ENCODE measurements at regions of chr3 and their contacts with region 1.

Region 1: DNA sequence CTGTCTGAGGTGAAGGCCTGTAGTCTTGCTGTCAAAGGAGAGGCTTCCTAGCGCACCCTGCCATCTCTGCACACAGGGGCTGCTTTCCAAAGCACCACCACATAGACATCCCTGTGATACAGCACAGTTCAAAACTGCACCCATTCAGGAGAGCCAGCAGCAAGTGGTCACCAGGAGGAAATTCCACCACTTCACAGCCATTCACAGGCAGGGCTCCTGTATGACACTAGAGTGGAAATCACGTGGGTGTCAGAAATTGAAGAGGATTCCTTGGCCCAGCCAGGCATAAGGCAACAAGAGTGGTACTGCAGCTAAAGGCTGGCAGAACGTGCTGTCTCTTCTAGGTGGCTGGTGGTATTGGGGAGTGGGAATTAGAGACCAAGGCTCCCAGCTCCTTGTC is 102.8 kb downstream of the RFTN1 start:
- DNase-seq: no peak
- ATAC-seq: no peak
- H3K4me3 ChIP-seq: no peak overlapping the region
- H3K27ac ChIP-seq: peak overlapping the region; percentile 37; the same call in 1 of the 2 replicates
- H3K4me1 ChIP-seq: peaks cover 47% of the 10 kb centered on the region
- H3K27me3 ChIP-seq: no peaks in the 10 kb centered on the region
- CTCF ChIP-seq: no peak
- EP300 ChIP-seq: no peak
- POLR2A ChIP-seq: no peak
- RAD21 ChIP-seq: no peak

Region 2: GRCh38 chr3:16388850-16389441 is 21.7 kb before region 1 on chr3:
- CTCF ChIA-PET with region 1: interaction called, 4 read pairs
- POLR2A ChIA-PET with region 1: interaction called, 6 read pairs
- RAD21 ChIA-PET with region 1: interaction called, 5 read pairs
- SMC1A ChIA-PET with region 1: interaction called, 13 read pairs
- in situ Hi-C with region 1: no loop called
- intact Hi-C with region 1: no loop called
- DNase-seq: no peak
- ATAC-seq: no peak
- H3K4me3 ChIP-seq: no peak overlapping the region
- H3K27ac ChIP-seq: peak overlapping the region; percentile 32; the same call in 1 of the 2 replicates
- H3K4me1 ChIP-seq: peaks cover 23% of the 10 kb centered on the region
- H3K27me3 ChIP-seq: no peaks in the 10 kb centered on the region
- CTCF ChIP-seq: no peak
- EP300 ChIP-seq: no peak
- POLR2A ChIP-seq: no peak
- RAD21 ChIP-seq: no peak

Region 3: DNA sequence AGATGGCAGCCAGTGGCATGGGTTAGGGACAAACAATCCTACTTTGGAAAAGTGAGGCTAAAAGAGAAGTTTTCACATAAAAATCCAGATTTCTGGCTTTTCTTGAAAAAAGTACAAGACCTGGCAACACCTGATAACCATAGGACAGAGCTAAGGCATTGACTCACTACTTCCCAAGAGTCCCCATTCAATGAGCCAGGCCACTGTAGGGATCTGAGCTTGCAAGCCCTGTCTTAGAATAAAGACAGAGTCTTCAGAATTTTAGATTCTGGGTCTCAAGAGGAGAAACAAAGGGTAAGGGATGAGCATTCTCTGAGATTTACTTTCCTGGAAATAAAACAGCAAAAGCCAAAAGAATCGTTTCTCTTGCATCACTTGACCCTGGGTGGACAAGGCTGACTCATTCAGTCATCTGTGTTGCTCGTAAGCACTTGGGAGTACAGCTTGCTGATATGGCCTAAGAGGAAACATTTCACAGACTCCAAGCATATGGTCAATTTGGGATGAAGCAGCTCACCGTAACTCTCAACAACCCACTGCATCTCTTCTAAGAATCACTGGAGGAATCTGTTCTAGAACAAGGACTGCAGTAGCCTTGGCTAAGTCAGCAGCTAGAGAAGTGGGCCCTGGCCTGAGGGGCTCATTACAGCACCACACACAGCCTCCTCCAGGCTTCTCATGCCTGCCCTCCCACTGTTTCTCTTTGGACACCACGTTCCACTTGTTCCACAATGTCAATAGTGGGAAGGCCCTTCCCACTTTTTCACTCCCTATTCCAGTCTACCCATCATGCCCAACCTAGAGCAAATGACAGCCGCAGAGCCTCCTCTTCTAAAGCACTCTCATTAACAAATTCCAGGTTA is 16.7 kb after region 1 on chr3:
- CTCF ChIA-PET with region 1: interaction called, 5 read pairs
- POLR2A ChIA-PET with region 1: interaction called, 14 read pairs
- RAD21 ChIA-PET with region 1: interaction called, 6 read pairs
- SMC1A ChIA-PET with region 1: interaction called, 54 read pairs
- in situ Hi-C with region 1: no loop called
- intact Hi-C with region 1: no loop called
- DNase-seq: no peak
- ATAC-seq: no peak
- H3K4me3 ChIP-seq: no peak overlapping the region
- H3K27ac ChIP-seq: no peak overlapping the region
- H3K4me1 ChIP-seq: peaks cover 28% of the 10 kb centered on the region
- H3K27me3 ChIP-seq: no peaks in the 10 kb centered on the region
- CTCF ChIP-seq: no peak
- EP300 ChIP-seq: no peak
- POLR2A ChIP-seq: no peak
- RAD21 ChIP-seq: no peak

Measured in GM12878 (cell line).